PC-9 (cell line): ENCODE measurements at regions of chr12 and their contacts with region 1.

Region 1: DNA sequence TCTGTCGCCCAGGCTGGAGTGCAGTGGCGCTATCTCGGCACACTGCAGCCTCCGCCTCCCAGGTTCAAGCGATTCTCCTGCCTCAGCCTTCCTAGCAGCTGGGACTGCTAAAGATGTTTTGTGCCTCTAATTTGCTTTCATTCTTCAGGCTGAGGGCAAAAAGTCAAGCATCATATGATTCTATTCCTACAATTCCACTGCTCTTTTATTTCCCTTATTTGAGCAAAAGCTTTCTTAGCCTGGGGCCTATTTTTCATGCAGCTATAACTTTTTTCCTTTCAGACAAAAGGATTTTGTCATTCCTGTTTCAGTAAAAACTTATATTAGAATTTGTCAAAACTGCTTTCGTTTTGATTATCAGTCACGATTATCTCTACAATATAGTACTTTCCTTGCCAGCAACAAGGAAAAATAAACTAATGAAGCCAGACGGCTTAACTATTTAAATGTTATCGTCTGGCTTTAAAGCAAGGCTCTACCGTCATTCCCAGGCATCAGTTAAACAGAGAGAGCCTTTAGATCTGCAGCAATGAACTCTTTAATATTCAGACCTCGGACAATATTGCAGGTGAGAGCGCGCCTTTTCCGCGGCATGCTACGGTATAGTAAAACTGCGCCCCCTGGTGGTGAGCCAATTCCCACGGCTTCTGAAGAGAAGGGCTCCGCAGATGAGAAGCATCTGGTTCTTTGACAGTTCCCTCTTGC is 1.4 kb upstream of the SLC2A13 start:
- DNase-seq: peak; percentile 61 to 65
- H3K4me3 ChIP-seq: peak overlapping the region; percentile 84
- H3K27ac ChIP-seq: no peak overlapping the region
- H3K4me1 ChIP-seq: peaks cover 5% of the 10 kb centered on the region; the same call in 1 of the 2 replicates
- H3K27me3 ChIP-seq: no peaks in the 10 kb centered on the region
- CTCF ChIP-seq: peak; percentile 94

Region 2: DNA sequence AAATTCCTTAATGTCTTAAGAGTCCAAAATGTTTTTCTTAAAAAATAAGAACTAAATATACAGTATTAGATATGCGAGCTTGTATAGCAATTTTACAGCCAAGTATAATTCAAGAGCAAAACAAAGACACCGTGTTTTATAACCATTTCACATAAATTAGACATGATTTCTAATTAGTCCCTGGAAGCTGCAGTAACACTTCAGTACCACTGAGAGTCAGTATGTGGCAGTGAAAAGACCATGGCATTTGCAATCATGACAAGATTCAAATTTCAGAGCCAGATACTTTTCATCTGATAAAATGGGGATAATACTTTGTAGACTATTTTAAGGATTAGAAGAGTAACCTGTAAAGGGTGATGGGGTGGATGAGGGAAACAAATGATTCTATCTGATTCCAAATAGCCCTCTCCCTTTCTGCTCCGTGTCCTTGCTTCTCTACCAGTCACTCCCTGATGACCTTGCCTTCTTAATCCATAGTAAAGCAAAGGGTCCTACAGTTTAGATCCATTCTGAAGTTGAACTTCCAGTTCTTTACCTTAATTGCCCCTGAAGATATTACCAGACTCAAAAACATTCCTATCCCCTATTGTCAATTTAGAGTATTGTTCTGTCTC is 342.2 kb before region 1 on chr12:
- CTCF ChIA-PET with region 1: no interaction called
- POLR2A ChIA-PET with region 1: no interaction called
- intact Hi-C with region 1: loop called (anchors 1 kb)
- DNase-seq: no peak
- H3K4me3 ChIP-seq: no peak overlapping the region
- H3K27ac ChIP-seq: no peak overlapping the region
- H3K4me1 ChIP-seq: no peaks in the 10 kb centered on the region
- H3K27me3 ChIP-seq: no peaks in the 10 kb centered on the region
- CTCF ChIP-seq: peak; percentile 90

Region 3: DNA sequence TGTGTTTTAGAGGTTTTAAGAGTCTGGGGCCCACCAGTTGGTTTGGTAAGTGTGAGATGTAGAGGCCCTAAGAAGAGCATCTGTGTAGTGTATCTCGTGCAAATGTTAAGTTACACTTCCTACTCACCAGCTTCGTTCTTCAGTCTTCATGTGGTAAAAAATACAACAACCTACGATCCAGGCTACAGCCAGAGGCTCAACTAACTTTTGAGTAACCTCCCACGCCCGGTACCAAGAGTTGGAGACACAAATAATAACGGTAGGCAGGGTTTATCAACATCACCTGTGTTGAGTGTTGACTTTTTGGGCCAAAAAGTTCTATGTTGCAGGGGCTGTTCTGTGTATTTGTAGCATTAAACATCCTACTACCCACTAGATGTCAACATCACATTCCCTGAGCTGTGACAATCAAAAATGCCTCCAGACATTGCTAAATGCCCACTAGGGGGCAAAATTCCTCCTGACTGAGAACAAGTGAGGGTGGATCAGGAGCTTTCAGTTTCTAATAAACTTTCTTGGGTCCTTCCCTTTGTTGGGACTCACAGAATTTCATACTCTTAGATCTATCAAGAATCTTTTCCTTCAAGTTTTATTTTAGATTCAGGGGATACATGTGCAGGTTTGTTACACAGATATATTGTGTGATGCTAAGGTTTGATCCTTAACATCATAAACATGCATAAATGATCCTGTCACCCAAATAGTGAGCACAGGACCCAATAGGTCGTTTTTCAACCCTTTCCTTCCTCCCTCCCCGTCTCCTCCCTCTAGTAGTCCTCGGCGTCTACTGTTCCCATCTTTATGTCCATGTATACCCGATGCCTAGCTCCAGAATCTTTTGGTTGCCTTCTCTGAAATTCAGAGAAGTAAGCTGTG is 96.1 kb before region 1 on chr12:
- CTCF ChIA-PET with region 1: interaction called, 8 read pairs
- POLR2A ChIA-PET with region 1: no interaction called
- intact Hi-C with region 1: loop called (anchors 1 kb)
- DNase-seq: peak; percentile 17 to 41
- H3K4me3 ChIP-seq: no peak overlapping the region
- H3K27ac ChIP-seq: no peak overlapping the region
- H3K4me1 ChIP-seq: no peaks in the 10 kb centered on the region
- H3K27me3 ChIP-seq: no peaks in the 10 kb centered on the region
- CTCF ChIP-seq: peak; percentile 82

Region 4: GRCh38 chr12:40086471-40086870 is 20.8 kb before region 1 on chr12:
- CTCF ChIA-PET with region 1: no interaction called
- POLR2A ChIA-PET with region 1: no interaction called
- intact Hi-C with region 1: loop called (anchors 1 kb)
- DNase-seq: no peak
- H3K4me3 ChIP-seq: no peak overlapping the region
- H3K27ac ChIP-seq: no peak overlapping the region
- H3K4me1 ChIP-seq: no peaks in the 10 kb centered on the region
- H3K27me3 ChIP-seq: no peaks in the 10 kb centered on the region
- CTCF ChIP-seq: no peak